Dendritic cell treated with granulocyte-macrophage colony-stimulating factor and Interleukin-4, amounts not matched to agents 40 ng/mL and 50 ng/mL, for 4 days (primary cell): ENCODE measurements at regions of chr14 and their contacts with region 1.

Region 1: DNA sequence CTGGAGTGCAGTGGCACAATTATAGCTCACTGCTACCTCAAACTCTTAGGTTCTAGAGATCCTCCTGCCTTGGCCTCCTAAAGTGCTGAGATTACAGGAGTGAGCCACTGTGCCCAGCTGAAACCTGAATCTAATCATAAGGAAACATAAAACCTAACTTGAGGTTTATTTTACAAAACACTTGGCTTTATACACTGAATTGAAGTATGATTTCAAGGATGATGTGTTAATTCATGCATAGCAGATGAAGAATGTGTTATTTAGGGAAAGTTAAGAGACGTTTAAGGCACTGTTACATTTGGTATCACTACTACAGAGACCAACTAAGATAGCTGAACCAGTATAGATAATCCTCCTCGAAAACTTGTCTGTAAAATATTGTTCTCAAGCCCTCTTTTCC is 6.4 kb downstream of the DICER1 start:
- H3K4me3 Mint-ChIP-seq: no peak overlapping the region
- H3K27ac Mint-ChIP-seq: no peak overlapping the region
- H3K4me1 Mint-ChIP-seq: peaks cover 88% of the 10 kb centered on the region
- H3K27me3 Mint-ChIP-seq: no peaks in the 10 kb centered on the region

Region 2: GRCh38 chr14:95106971-95107370 is 43.9 kb before region 1 on chr14:
- intact Hi-C with region 1: no loop called
- H3K4me3 Mint-ChIP-seq: no peak overlapping the region
- H3K27ac Mint-ChIP-seq: no peak overlapping the region
- H3K4me1 Mint-ChIP-seq: peaks cover 5% of the 10 kb centered on the region
- H3K27me3 Mint-ChIP-seq: no peaks in the 10 kb centered on the region

Region 3: DNA sequence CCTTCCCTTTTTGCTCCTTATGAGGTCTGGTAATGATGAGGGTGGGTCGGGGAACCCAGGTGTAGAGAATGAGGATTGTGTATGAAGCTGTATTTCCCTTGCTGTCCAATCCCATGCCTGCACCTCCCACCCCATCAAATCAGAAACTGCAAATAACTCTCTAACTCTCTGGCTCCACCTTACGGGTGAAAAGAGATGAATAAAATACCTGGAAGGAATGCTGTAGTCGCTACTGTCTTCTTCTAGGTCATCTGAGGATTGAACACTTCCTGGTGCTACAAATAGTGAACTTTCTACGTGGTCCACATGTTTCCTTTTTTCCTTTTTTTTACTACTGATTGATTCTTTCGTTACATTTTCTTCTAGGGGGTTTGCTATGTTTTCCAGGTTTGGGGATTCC is 45.4 kb after region 1 on chr14:
- intact Hi-C with region 1: loop called (anchors 5 kb)
- H3K4me3 Mint-ChIP-seq: no peak overlapping the region
- H3K27ac Mint-ChIP-seq: no peak overlapping the region
- H3K4me1 Mint-ChIP-seq: peaks cover 17% of the 10 kb centered on the region
- H3K27me3 Mint-ChIP-seq: no peaks in the 10 kb centered on the region